H1 (cell line): ENCODE measurements at regions of chr17 and their contacts with region 1.

Region 1: DNA sequence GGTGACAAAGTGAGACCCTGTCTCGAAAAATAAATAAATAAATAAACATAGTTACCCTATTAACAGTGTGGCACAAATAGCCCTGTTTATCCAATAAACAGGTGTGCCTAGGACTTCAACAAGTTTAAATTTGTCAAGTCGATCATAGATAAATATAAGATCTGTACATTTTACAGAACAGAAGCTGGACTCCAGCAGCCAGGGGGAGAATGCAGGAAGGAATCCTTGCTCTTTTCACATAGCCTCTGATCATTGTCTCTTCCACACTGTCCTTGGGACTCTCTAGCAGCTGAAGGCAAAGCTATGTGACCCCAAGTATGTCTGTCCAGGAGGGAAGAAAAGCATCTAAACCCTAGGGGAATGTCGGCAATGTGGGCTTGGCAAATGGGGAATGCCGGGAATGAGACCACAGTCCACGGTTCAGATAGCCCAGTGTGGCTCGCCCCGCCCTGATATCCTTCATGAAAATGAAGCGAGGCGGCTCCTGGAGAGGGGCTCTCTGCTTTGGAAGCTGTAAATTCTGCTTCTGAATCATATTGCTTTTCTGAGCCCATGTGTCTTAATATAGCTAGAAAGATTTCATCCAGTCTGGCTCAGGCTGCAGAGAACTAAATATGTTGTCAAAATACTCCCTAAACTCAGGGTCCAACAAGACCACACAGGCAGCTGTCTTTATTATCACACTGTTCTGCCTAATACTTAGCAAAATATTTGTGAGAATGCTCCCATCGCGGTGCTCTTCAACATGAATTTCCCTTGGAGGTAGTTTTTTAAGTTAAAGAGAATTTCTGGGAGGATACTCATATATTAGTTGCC is 24.9 kb upstream of the GRB2 start:
- DNase-seq: peak; percentile 47
- H3K4me3 ChIP-seq: no peak overlapping the region
- H3K27ac ChIP-seq: no peak overlapping the region
- H3K4me1 ChIP-seq: no peaks in the 10 kb centered on the region
- H3K27me3 ChIP-seq: no peaks in the 10 kb centered on the region
- CTCF ChIP-seq: no peak
- EP300 ChIP-seq: no peak
- POLR2A ChIP-seq: no peak
- RAD21 ChIP-seq: no peak

Region 2: GRCh38 chr17:75440738-75441448 is 10.5 kb after region 1 on chr17:
- CTCF ChIA-PET with region 1: interaction called, 10 read pairs
- POLR2A ChIA-PET with region 1: interaction called, 3 read pairs
- DNase-seq: no peak
- H3K4me3 ChIP-seq: no peak overlapping the region
- H3K27ac ChIP-seq: no peak overlapping the region
- H3K4me1 ChIP-seq: no peaks in the 10 kb centered on the region
- H3K27me3 ChIP-seq: no peaks in the 10 kb centered on the region
- CTCF ChIP-seq: no peak
- EP300 ChIP-seq: no peak
- POLR2A ChIP-seq: no peak
- RAD21 ChIP-seq: no peak

Region 3: DNA sequence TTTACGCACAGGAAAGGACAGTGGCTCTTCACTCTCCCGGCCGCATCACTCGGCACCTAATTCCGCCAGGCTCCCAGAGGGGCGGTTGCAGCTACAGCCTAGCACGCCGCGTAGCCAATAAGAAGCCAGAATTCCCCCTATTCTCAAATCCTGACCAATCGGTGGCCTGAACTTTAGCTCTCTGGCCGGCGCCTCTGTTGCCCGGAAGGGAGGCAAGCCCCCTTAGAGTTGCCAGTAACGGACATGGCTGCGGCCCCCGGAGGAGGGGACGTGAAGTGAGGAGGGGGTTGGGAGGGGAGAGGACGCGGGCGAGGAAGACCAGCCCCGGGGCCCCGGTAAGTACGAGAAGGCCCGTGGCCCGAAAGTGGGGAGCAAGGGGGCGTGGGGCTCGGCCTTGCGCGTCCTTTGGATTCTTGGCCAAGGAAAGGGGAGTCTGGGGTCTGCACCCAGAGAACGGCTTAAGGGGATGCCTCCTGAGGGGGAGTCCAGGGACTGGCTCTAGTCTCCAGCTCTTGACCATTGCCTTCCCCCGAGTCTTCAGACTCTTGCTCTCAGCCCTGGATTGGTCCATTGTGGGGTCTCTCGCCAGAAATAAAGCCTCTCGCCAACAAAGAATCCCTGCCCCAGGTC is 26.2 kb after region 1 on chr17 and contains the start of gene TMEM94:
- CTCF ChIA-PET with region 1: interaction called, 5 read pairs
- POLR2A ChIA-PET with region 1: interaction called, 17 read pairs
- DNase-seq: peak; percentile 87 to 92
- H3K4me3 ChIP-seq: peak within 1 kb of the TSS; percentile 75 to 83 (median 80)
- H3K27ac ChIP-seq: peak within 1 kb of the TSS; percentile 85
- H3K4me1 ChIP-seq: peaks cover 0 to 7% (median 4%) of the 10 kb centered on the region in 4 experiments; a peak in 6 of 7 replicates
- H3K27me3 ChIP-seq: no peaks in the 10 kb centered on the region
- CTCF ChIP-seq: no peak
- EP300 ChIP-seq: no peak
- POLR2A ChIP-seq: peak; percentile 68 to 81
- RAD21 ChIP-seq: no peak
- total RNA-seq, gene TMEM94: 54.8 and 64.3 TPM in 2 replicates

Region 4: DNA sequence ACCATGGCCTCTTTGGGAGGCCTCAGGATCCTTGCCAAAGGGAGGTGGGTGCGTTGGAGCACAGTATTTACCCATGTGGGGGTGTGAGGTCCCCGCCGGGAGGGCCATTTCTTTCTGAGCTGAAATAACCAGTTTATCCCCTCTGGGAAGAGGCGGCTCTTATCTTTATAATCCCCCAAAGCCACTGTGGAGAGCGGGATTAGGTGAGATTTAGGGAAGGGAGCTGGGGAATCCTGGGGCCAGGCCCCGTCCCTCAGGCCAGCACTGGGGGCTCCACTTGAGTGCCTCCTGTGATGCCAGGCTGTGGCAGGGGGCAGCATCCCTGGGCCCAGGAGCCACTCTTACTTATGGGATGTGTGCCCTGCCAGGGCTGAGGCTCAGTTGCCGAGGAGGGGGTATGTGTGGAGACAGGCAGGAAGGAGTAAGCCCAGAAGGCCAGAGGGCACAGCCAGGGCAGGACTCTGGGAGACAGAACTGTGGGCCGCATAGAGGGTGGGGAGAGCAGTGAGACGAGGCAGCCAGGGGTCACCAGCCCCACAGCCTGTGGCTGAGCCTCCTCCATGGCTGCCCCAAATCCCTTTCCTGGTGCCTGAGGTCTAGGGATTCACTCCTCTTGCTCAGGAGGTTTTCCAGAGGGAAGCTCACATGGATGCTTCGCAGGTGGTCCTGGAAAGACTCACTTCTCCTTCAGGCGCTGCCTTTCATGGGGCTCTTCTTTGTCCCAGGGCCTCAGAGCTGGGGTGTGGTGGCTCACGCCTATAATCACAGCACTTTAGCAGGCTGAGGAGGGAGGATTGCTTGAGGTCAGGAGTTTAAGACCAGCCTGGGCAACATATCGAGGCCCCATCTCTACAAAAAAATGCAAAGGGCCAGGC is 51.1 kb after region 1 on chr17:
- CTCF ChIA-PET with region 1: interaction called, 31 read pairs
- POLR2A ChIA-PET with region 1: no interaction called
- DNase-seq: no peak
- H3K4me3 ChIP-seq: no peak overlapping the region
- H3K27ac ChIP-seq: peak overlapping the region; percentile 38; the same call in 1 of the 2 replicates
- H3K4me1 ChIP-seq: peaks cover 0 to 7% (median under 1%) of the 10 kb centered on the region in 4 experiments; a peak in 4 of 7 replicates
- H3K27me3 ChIP-seq: no peaks in the 10 kb centered on the region
- CTCF ChIP-seq: no peak
- EP300 ChIP-seq: no peak
- POLR2A ChIP-seq: no peak
- RAD21 ChIP-seq: no peak

Region 5: GRCh38 chr17:75487351-75488070 is 57.1 kb after region 1 on chr17:
- CTCF ChIA-PET with region 1: interaction called, 31 read pairs
- POLR2A ChIA-PET with region 1: no interaction called
- DNase-seq: no peak
- H3K4me3 ChIP-seq: no peak overlapping the region
- H3K27ac ChIP-seq: no peak overlapping the region
- H3K4me1 ChIP-seq: no peaks in the 10 kb centered on the region; a peak in 1 of 7 replicates
- H3K27me3 ChIP-seq: no peaks in the 10 kb centered on the region
- CTCF ChIP-seq: no peak
- EP300 ChIP-seq: no peak
- POLR2A ChIP-seq: no peak
- RAD21 ChIP-seq: no peak

Region 6: DNA sequence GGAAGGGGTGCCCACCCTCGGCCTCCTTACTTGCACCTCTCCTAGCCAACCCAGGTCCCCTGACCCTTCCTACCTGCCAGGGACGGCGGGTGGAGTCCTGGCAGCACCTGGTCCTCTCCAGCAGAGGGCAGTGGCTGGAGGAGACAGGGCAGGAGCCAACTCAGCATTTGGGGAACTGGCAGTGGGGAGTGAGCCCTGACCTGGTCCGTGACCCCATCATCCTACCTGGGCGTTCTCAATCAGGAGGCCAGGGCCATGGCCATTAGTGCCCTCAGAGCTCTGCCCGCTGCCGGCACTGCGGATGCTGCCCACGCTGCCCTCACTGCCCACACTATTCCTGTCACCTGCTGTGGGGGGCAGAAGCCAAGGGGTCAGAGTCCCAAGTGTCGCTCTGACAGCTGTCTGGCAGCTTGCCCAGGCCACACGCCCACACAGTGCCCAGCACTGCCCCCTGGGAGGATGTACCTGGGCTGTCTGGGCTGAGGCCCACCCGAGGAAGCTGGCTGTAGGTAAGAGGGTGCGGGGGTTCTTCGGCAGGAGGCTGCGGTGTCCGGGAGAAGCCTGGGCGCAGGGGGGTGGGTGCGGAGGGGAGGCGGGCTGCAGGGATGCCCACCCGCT is 74.1 kb after region 1 on chr17:
- CTCF ChIA-PET with region 1: interaction called, 67 read pairs
- POLR2A ChIA-PET with region 1: interaction called, 3 read pairs
- DNase-seq: peak in 1 of 2 experiments; percentile 78
- H3K4me3 ChIP-seq: no peak overlapping the region
- H3K27ac ChIP-seq: no peak overlapping the region
- H3K4me1 ChIP-seq: peaks cover 0 to 2% (median 0%) of the 10 kb centered on the region in 4 experiments; a peak in 1 of 7 replicates
- H3K27me3 ChIP-seq: no peaks in the 10 kb centered on the region
- CTCF ChIP-seq: peak; percentile 82 to 95 (median 94)
- EP300 ChIP-seq: no peak
- POLR2A ChIP-seq: no peak
- RAD21 ChIP-seq: peak; percentile 54 to 72